Dorsolateral prefrontal cortex (tissue), 120 donors: ENCODE measurements at regions of chr11 and their contacts with region 1.

Region 1: DNA sequence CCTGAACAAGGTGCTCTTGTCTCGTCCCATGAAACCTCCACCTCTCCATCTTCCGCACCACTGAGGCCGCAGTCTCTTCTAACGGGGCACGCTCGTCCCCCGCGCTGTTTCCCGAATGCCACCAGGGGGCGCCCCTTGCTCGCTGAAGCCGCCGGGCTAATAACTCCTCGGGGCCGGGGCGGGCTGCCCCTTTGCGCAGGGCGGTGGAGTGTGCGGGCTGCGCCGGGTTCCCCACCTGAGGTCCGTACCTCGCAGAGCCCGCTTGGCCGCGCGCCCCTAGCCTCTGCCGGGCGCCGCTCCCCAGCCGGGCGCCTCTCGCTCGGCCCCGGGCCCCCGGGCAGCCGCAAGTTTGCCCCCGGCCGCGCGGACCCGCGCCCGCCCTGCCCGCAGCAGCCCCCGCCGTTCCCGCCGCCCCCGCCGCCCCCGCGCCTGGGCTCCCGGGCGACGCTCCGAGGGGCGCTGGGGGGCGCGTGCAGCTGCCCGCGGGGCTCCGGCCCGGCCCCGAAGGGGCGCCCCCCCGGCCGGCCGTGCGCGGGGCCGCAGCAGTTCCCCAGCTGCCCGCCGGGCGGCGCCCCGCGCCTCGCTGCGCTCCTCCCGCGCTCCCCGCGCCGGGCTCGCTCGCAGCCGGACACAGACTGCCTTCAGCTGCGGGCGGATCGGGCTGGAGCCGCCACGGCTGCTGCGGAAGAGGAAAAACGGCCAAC is at the start of gene GRIK4:
- DNase-seq: peak; percentile 75 to 92 (median 89)
- H3K4me3 ChIP-seq: peak within 1 kb of the TSS; percentile 31 to 77 (median 60)
- H3K27ac ChIP-seq: peak within 1 kb of the TSS in 42 of 59 donors; percentile 0 to 84 (median 70)
- H3K27me3 ChIP-seq: peaks cover 0 to 13% (median 0%) of the 10 kb centered on the region in 45 donors
- CTCF ChIP-seq: peak; percentile 77 to 99 (median 96)
- total RNA-seq, gene GRIK4: 7.8 to 24.1 (median 14.8) TPM

Region 2: GRCh38 chr11:120335908-120336640 is 175.2 kb before region 1 on chr11 and contains the start of gene ARHGEF12:
- intact Hi-C with region 1: loop called (anchors 2 kb)
- DNase-seq: peak; percentile 81 to 95 (median 91)
- H3K4me3 ChIP-seq: peak within 1 kb of the TSS; percentile 72 to 96 (median 89)
- H3K27ac ChIP-seq: peak within 1 kb of the TSS; percentile 83 to 99 (median 97)
- H3K27me3 ChIP-seq: no peaks in the 10 kb centered on the region
- CTCF ChIP-seq: peak in 46 of 56 donors; percentile 15 to 70 (median 45)
- total RNA-seq, gene ARHGEF12: 103 to 277 (median 191) TPM

Region 3: DNA sequence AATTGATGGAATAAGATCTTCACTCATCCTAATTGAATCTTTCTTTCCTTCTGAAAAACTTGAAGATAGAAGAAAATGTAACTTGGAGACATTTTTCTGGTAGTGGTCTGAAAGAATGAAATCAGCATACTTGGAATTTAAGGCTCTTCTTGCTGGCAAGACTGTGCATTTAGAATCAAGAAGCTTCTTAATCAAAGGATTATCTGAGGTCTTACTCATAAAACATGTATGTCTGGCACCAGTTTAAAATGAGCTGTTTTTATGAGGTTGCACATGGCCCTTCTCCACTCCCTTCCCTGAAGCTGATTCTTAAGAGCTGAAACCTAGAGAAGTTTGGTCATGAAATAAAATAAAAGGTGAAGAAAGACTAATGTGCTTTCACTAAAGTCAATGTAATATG is 97.8 kb before region 1 on chr11:
- intact Hi-C with region 1: no loop called
- DNase-seq: no peak
- H3K4me3 ChIP-seq: no peak overlapping the region
- H3K27ac ChIP-seq: no peak overlapping the region
- H3K27me3 ChIP-seq: no peaks in the 10 kb centered on the region
- CTCF ChIP-seq: no peak

Region 4: DNA sequence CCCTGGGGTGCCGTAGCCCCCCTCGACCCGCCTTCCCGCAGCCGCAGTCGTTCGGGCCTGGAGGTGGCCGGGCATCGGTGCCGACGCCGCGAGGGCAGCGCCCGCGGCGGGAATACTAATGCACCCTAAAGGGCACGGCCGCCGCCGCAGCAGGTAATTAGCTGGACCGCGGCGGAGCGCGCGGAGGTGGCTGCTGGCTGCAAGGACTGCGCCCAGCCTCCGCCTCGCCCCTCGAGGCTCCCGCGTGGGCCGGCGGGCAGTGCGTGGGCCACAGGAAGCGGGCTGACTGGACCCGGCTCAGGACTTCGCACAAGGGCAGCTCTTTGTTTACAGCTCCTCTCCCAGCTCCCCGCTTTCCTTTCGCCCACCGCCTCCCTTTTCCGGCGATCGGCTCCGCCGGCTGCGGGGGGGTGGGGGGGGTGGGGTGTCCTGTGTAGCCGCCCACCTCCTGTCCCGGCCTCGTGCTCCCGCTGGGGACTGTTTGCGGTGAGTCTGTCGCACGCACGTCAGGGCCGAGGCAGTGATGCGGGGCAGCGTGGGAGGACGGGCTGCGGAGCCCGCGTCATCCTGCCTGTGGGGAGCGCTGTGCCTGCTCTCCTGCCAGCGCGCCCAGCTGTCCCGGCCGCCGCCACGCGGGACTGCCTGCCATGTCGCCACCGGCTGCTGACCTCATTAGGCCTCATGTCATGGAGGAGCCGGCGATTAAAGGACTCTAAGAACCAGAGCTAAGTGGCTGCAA is 53.5 kb after region 1 on chr11:
- intact Hi-C with region 1: loop called (anchors 1 to 2 kb)
- DNase-seq: peak; percentile 49 to 89 (median 80)
- H3K4me3 ChIP-seq: peak overlapping the region; percentile 39 to 74 (median 58)
- H3K27ac ChIP-seq: peak overlapping the region; percentile 81 to 99 (median 96)
- H3K27me3 ChIP-seq: peaks cover 0 to 3% (median 0%) of the 10 kb centered on the region in 45 donors
- CTCF ChIP-seq: peak in 45 of 56 donors; percentile 5 to 71 (median 40)

Region 5: GRCh38 chr11:120801801-120802689 is 290.8 kb after region 1 on chr11:
- intact Hi-C with region 1: loop called (anchors 1 to 5 kb)
- DNase-seq: peak; percentile 52 to 83 (median 72)
- H3K4me3 ChIP-seq: no peak overlapping the region
- H3K27ac ChIP-seq: no peak overlapping the region
- H3K27me3 ChIP-seq: no peaks in the 10 kb centered on the region
- CTCF ChIP-seq: peak; percentile 77 to 96 (median 89)

Region 6: GRCh38 chr11:120929664-120930154 is 418.4 kb after region 1 on chr11:
- intact Hi-C with region 1: loop called in 1 of 2 experiments (anchors 5 kb)
- DNase-seq: peak in 1 of 10 donors; percentile 43
- H3K4me3 ChIP-seq: no peak overlapping the region
- H3K27ac ChIP-seq: peak overlapping the region in 6 of 59 donors; percentile 1 to 46 (median 24)
- H3K27me3 ChIP-seq: no peaks in the 10 kb centered on the region
- CTCF ChIP-seq: peak in 55 of 56 donors; percentile 18 to 76 (median 61)

Region 7: GRCh38 chr11:121112498-121113455 is 601.5 kb after region 1 on chr11:
- intact Hi-C with region 1: loop called (anchors 2 to 5 kb)
- DNase-seq: peak; percentile 40 to 86 (median 72)
- H3K4me3 ChIP-seq: peak overlapping the region in 2 of 59 donors; percentile 22 to 24
- H3K27ac ChIP-seq: no peak overlapping the region
- H3K27me3 ChIP-seq: no peaks in the 10 kb centered on the region
- CTCF ChIP-seq: peak; percentile 22 to 85 (median 69)